ENCODE measurements at regions of chr6 and their contacts with region 1.

Region 1: GRCh38 chr6:11496152-11497060 is 41.1 kb upstream of the TMEM170B start:
- DNase-seq: peak in 3 of 6 donors; percentile 51 to 78 (median 64)
- ATAC-seq: peak; percentile 95 to 99 (median 98)
- H3K4me3 ChIP-seq: no peak overlapping the region
- H3K27ac ChIP-seq: no peak overlapping the region
- H3K4me1 ChIP-seq: no peaks in the 10 kb centered on the region
- H3K27me3 ChIP-seq: no peaks in the 10 kb centered on the region
- CTCF ChIP-seq: peak; percentile 53 to 88 (median 74)

Region 2: DNA sequence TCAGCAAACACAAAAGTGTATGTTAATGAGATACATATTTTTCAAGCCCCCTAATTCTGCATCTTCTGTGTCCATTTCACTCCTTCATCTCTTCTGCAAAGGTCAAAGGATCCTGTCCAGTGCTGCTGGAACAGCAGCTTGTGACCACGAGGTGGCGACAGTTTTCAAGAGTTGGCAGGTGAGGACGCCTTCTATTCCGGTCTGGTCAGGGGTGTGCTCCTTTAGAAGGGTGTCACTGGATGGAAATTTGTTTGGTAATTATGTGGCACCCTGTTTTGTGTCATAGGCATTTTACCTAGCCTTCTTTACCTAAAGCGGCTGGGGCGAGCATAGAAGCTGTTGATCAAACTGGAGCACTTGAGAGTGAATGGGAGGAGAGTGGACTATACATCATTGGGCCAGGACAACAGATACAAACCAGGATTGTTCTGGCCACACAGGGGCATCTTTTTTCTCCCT is 352.0 kb before region 1 on chr6:
- intact Hi-C with region 1: loop called in 2 of 3 experiments (anchors 5 to 10 kb)
- DNase-seq: peak; percentile 53 to 85 (median 71)
- ATAC-seq: peak; percentile 87 to 97 (median 96)
- H3K4me3 ChIP-seq: no peak overlapping the region
- H3K27ac ChIP-seq: no peak overlapping the region
- H3K4me1 ChIP-seq: no peaks in the 10 kb centered on the region
- H3K27me3 ChIP-seq: no peaks in the 10 kb centered on the region
- CTCF ChIP-seq: peak; percentile 55 to 81 (median 68)

Region 3: DNA sequence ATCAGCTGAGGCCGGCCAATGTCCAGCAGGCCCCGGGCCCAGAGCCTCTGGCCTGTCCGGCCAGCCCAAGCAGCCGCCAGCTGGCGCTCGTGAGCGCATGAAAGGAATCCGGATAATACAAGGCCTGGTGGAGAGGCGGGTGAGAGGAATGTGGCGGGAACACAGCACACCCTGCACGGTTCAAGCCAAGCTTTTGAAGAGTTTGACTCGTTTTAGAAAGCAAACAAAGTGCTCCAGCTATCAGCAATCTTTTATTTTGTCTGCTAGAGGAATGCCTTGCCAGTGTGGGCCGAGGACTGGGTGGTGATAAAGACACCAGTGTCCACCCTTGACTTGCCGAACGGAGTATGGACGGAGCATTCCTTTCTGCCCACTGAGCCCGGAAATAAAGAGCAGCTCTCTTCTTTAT is 254.6 kb before region 1 on chr6:
- intact Hi-C with region 1: loop called in 2 of 3 experiments (anchors 5 to 10 kb)
- DNase-seq: peak; percentile 69 to 90 (median 82)
- ATAC-seq: peak; percentile 97 to 100 (median 99)
- H3K4me3 ChIP-seq: no peak overlapping the region
- H3K27ac ChIP-seq: no peak overlapping the region
- H3K4me1 ChIP-seq: peaks cover 0 to 3% (median 0%) of the 10 kb centered on the region in 3 donors
- H3K27me3 ChIP-seq: no peaks in the 10 kb centered on the region
- CTCF ChIP-seq: peak; percentile 58 to 70 (median 67)

Measured in pancreas (tissue), 10 donors.